Activated CD8-positive, alpha-beta memory T cell treated with anti-CD3 and anti-CD28 coated beads, Interleukin-2, amount 10 ng/mL, durations not matched to agents 7 days and 5 days (primary cell): ENCODE measurements at regions of chr17 and their contacts with region 1.

Region 1: GRCh38 chr17:42577532-42578281 is at the start of gene PSMC3IP:
- DNase-seq: peak; percentile 97
- ATAC-seq: peak; percentile 96
- H3K4me3 Mint-ChIP-seq: peak within 1 kb of the TSS; percentile 82
- H3K27ac Mint-ChIP-seq: peak within 1 kb of the TSS; percentile 95
- H3K4me1 Mint-ChIP-seq: peaks cover 49% of the 10 kb centered on the region
- H3K27me3 Mint-ChIP-seq: no peaks in the 10 kb centered on the region
- total RNA-seq, gene PSMC3IP: 24.4 to 25.5 TPM

Region 2: GRCh38 chr17:42554250-42555121 is 23.2 kb before region 1 on chr17:
- CTCF ChIA-PET with region 1: interaction called, 18 read pairs
- DNase-seq: peak; percentile 93
- ATAC-seq: peak; percentile 94
- H3K4me3 Mint-ChIP-seq: peak overlapping the region; percentile 85
- H3K27ac Mint-ChIP-seq: peak overlapping the region; percentile 92
- H3K4me1 Mint-ChIP-seq: peaks cover 21% of the 10 kb centered on the region
- H3K27me3 Mint-ChIP-seq: no peaks in the 10 kb centered on the region

Region 3: GRCh38 chr17:42598905-42599304 is 21.2 kb after region 1 on chr17:
- CTCF ChIA-PET with region 1: interaction called, 19 read pairs
- DNase-seq: no peak
- ATAC-seq: no peak
- H3K4me3 Mint-ChIP-seq: no peak overlapping the region
- H3K27ac Mint-ChIP-seq: no peak overlapping the region
- H3K4me1 Mint-ChIP-seq: peaks cover 3% of the 10 kb centered on the region
- H3K27me3 Mint-ChIP-seq: no peaks in the 10 kb centered on the region

Region 4: DNA sequence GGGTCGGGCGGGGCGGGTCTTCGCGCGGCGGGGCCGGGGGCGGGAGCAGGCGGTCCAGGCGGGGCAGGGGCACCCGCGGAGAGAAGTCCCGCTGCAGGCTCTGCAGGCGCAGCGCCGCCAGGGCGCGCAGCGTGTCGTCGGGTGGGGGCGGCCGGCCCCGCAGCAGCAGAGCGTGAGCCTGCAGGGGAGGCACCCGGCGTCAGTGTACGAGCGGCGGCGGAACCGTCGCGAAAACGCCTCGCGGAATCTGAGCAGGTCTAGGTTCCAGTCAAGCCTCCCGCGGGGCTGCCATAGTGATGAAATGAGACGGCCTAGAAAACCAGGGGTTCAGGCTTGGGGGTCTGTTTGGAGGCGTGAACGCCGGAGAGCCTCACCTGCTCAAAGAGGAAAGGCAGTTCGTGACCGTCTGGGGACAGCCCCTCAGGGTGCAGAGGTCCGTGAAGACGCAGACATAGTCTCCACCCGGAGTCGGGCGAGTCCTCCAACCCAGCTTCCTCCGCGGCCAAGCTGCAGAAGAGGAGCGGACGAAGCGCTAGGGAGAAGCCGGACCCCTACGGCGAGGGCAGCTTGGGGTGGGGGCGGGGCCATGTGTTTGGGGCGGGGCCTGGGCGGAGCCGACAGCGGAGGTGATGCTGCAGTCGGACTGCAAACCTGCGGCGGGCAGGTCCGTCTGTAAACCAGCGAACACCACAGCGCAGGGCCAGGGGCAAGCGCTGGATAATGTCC is 92.7 kb after region 1 on chr17:
- CTCF ChIA-PET with region 1: interaction called, 16 read pairs
- DNase-seq: no peak
- ATAC-seq: peak; percentile 69
- H3K4me3 Mint-ChIP-seq: peak overlapping the region; percentile 52
- H3K27ac Mint-ChIP-seq: no peak overlapping the region
- H3K4me1 Mint-ChIP-seq: peaks cover 24% of the 10 kb centered on the region
- H3K27me3 Mint-ChIP-seq: peaks cover 52% of the 10 kb centered on the region

Region 5: DNA sequence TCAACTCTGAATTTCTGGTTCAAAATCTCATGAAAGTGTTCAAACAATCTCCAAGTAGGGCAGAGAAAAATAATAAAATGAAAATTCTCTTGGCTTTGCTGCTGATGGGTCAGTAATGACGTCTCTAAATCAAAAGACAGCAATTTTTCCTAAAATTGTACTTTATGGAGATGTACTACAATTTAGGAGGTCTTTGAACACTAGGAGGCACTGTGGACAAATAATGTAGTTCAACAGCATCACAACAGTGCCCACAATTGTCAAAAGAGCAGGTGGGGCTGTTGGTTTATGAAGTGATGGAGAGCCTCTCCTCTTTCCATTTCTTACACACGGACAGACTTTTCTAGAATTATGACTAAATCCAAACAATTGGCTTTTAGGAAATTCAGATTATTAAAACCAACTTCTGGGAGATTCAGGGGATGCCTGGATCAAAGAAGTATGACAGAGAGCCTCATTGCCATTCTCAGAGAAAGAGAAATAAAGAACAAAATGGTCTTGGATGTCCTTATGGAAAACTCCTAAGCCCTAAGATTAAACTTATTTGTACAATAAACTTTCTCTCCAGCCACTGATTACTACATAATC is 143.4 kb after region 1 on chr17:
- CTCF ChIA-PET with region 1: interaction called, 15 read pairs
- DNase-seq: no peak
- ATAC-seq: peak; percentile 71
- H3K4me3 Mint-ChIP-seq: no peak overlapping the region
- H3K27ac Mint-ChIP-seq: no peak overlapping the region
- H3K4me1 Mint-ChIP-seq: peaks cover 2% of the 10 kb centered on the region
- H3K27me3 Mint-ChIP-seq: no peaks in the 10 kb centered on the region

Region 6: DNA sequence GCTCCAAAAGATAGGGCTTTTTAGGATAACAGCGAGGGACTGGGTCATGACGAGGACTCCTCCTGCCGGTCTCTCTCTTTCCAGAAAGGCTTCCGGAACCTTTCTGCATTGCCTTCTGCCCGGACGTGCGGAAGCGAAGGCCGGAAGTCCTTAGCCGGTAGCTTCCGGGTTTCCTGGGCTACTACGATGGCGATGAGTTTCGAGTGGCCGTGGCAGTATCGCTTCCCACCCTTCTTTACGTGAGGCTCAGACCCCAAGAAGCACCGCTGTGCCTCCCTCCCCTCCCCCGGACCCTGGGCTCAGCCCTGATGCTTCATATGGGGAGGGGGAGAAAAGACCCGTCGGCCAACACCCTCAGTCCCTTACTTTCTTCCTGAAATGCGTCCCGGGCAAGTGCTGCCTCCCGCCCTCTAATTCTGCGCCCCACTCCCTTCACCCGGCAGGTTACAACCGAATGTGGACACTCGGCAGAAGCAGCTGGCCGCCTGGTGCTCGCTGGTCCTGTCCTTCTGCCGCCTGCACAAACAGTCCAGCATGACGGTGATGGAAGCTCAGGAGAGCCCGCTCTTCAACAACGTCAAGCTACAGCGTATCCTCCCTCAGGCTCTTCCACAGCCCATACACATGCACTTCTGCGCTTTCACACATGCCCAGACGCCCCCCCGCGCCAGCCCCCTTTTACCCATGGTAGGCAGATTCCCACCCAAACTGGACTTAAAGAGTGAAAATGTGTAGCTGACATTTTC is 195.8 kb after region 1 on chr17 and contains the start of gene VPS25:
- CTCF ChIA-PET with region 1: interaction called, 25 read pairs
- DNase-seq: peak; percentile 84
- ATAC-seq: peak; percentile 97
- H3K4me3 Mint-ChIP-seq: peak within 1 kb of the TSS; percentile 99
- H3K27ac Mint-ChIP-seq: peak within 1 kb of the TSS; percentile 98
- H3K4me1 Mint-ChIP-seq: peaks cover 35% of the 10 kb centered on the region
- H3K27me3 Mint-ChIP-seq: no peaks in the 10 kb centered on the region
- total RNA-seq, gene VPS25: 62.8 to 77.8 TPM

Region 7: GRCh38 chr17:42997984-42998938 is 420.6 kb after region 1 on chr17 and contains the start of gene RPL27:
- CTCF ChIA-PET with region 1: interaction called, 11 read pairs
- DNase-seq: peak; percentile 99
- ATAC-seq: peak; percentile 99
- H3K4me3 Mint-ChIP-seq: peak within 1 kb of the TSS; percentile 100
- H3K27ac Mint-ChIP-seq: peak within 1 kb of the TSS; percentile 99
- H3K4me1 Mint-ChIP-seq: peaks cover 36% of the 10 kb centered on the region
- H3K27me3 Mint-ChIP-seq: no peaks in the 10 kb centered on the region
- total RNA-seq, gene RPL27: 889 to 934 TPM